ENCODE measurements at regions of chr17 and their contacts with region 1.

Region 1: GRCh38 chr17:37818689-37819088 is 73.8 kb upstream of the HNF1B start:
- DNase-seq: no peak
- ATAC-seq: no peak
- H3K4me3 ChIP-seq: no peak overlapping the region
- H3K27ac ChIP-seq: no peak overlapping the region
- H3K4me1 ChIP-seq: peaks cover 0 to 12% (median 0%) of the 10 kb centered on the region in 12 donors
- H3K27me3 ChIP-seq: peaks cover 0 to 20% (median 0%) of the 10 kb centered on the region in 9 donors
- CTCF ChIP-seq: no peak
- POLR2A ChIP-seq: no peak

Region 2: GRCh38 chr17:37650419-37651003 is 168.2 kb before region 1 on chr17:
- intact Hi-C with region 1: loop called in 7 of 10 experiments (anchors 2 to 10 kb)
- DNase-seq: no peak
- ATAC-seq: peak in 1 of 4 donors; percentile 66
- H3K4me3 ChIP-seq: no peak overlapping the region
- H3K27ac ChIP-seq: no peak overlapping the region
- H3K4me1 ChIP-seq: peaks cover 0 to 19% (median 0%) of the 10 kb centered on the region in 12 donors
- H3K27me3 ChIP-seq: peaks cover 0 to 36% (median 0%) of the 10 kb centered on the region in 9 donors
- CTCF ChIP-seq: peak in 9 of 12 donors; percentile 17 to 50 (median 42)
- POLR2A ChIP-seq: no peak

Region 3: GRCh38 chr17:37752482-37752881 is 66.2 kb before region 1 on chr17:
- intact Hi-C with region 1: loop called in 1 of 10 experiments (anchors 10 kb)
- DNase-seq: no peak
- ATAC-seq: no peak
- H3K4me3 ChIP-seq: no peak overlapping the region
- H3K27ac ChIP-seq: no peak overlapping the region
- H3K4me1 ChIP-seq: no peaks in the 10 kb centered on the region
- H3K27me3 ChIP-seq: peaks cover 0 to 46% (median 11%) of the 10 kb centered on the region in 9 donors
- CTCF ChIP-seq: no peak
- POLR2A ChIP-seq: no peak